ENCODE measurements at regions of chr3 and their contacts with region 1.

Region 1: GRCh38 chr3:15405448-15406050 is 21.8 kb downstream of the METTL6 start:
- DNase-seq: peak in 7 of 35 experiments; percentile 12 to 76 (median 21)
- ATAC-seq: peak in 2 of 4 experiments; percentile 43 to 69
- H3K4me3 ChIP-seq: no peak overlapping the region
- H3K4me3 Mint-ChIP-seq: no peak overlapping the region
- H3K27ac ChIP-seq: no peak overlapping the region
- H3K27ac Mint-ChIP-seq: no peak overlapping the region
- H3K4me1 ChIP-seq: peaks cover 0 to 2% of the 10 kb centered on the region in 2 experiments
- H3K4me1 Mint-ChIP-seq: peaks cover 0 to 16% (median 7%) of the 10 kb centered on the region in 3 donors
- H3K27me3 ChIP-seq: no peaks in the 10 kb centered on the region
- H3K27me3 Mint-ChIP-seq: no peaks in the 10 kb centered on the region

Region 2: GRCh38 chr3:15199493-15200105 is 205.9 kb before region 1 on chr3:
- CTCF ChIA-PET with region 1: interaction called, 22 to 82 read pairs
- POLR2A ChIA-PET with region 1: interaction called in 1 of 2 experiments, 3 read pairs
- DNase-seq: no peak
- ATAC-seq: no peak
- H3K4me3 ChIP-seq: no peak overlapping the region
- H3K4me3 Mint-ChIP-seq: no peak overlapping the region
- H3K27ac ChIP-seq: no peak overlapping the region
- H3K27ac Mint-ChIP-seq: no peak overlapping the region
- H3K4me1 ChIP-seq: peaks cover 0 to 5% of the 10 kb centered on the region in 2 experiments
- H3K4me1 Mint-ChIP-seq: peaks cover 2 to 12% (median 3%) of the 10 kb centered on the region in 3 donors
- H3K27me3 ChIP-seq: no peaks in the 10 kb centered on the region
- H3K27me3 Mint-ChIP-seq: no peaks in the 10 kb centered on the region

Region 3: DNA sequence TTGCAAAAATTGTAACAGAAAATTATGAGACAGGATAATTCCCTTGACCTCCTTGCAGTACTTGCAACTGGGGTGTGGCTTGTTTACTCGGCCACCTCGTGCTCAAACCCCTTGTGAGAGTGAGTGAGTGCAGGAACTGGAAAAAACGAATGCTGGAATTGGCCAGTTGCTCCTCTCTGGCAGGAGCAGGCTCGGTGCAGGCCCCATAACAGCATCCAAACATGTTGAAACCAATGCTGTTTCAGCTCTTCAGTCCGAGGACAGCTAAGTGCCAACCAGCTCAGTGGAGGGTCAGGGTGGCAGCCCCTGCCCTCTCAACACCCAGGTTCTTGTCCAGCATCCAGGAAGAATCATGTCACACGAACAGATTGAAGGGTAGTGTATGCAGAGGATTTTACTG is 15.1 kb before region 1 on chr3:
- CTCF ChIA-PET with region 1: no interaction called
- POLR2A ChIA-PET with region 1: no interaction called
- DNase-seq: no peak
- ATAC-seq: no peak
- H3K4me3 ChIP-seq: no peak overlapping the region
- H3K4me3 Mint-ChIP-seq: no peak overlapping the region
- H3K27ac ChIP-seq: no peak overlapping the region
- H3K27ac Mint-ChIP-seq: no peak overlapping the region
- H3K4me1 ChIP-seq: no peaks in the 10 kb centered on the region
- H3K4me1 Mint-ChIP-seq: peaks cover 0 to 12% (median 0%) of the 10 kb centered on the region in 3 donors
- H3K27me3 ChIP-seq: no peaks in the 10 kb centered on the region
- H3K27me3 Mint-ChIP-seq: no peaks in the 10 kb centered on the region

Region 4: DNA sequence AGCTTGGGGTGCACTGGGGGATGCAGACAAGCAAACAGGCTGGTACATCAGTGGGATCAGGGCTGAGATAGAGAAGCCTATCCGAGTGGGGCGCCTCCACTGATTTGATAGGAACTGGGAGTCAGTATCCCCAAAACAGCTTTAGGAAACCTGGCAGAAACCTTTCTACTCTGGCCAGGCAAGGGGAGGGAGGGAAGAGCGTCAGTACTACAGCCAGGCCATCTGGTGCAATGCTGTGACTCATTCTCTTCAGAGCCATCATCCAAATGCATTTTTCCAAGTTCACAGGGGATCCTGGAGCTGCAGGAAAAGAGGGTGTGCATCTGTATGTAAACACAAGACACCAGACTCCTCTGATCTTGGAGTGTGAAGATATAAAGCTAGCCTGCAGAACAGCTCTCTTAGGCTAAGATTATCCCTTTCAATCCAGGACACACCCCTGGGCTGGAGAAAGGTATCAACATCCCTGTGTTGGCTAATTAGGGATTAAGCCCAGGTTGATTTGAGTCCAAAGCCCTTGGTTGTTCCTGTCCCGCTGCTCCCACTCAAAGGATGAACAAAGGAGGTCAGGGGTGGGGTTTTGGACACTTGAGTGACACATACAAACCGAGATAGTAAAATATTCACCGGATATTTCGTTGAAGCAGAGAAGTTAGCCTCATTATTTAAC is 778.2 kb after region 1 on chr3:
- CTCF ChIA-PET with region 1: no interaction called
- POLR2A ChIA-PET with region 1: no interaction called
- DNase-seq: no peak
- ATAC-seq: no peak
- H3K4me3 ChIP-seq: no peak overlapping the region
- H3K4me3 Mint-ChIP-seq: no peak overlapping the region
- H3K27ac ChIP-seq: no peak overlapping the region
- H3K27ac Mint-ChIP-seq: no peak overlapping the region
- H3K4me1 ChIP-seq: no peaks in the 10 kb centered on the region
- H3K4me1 Mint-ChIP-seq: peaks cover 1 to 2% (median 2%) of the 10 kb centered on the region in 3 donors
- H3K27me3 ChIP-seq: peaks cover 0 to 6% of the 10 kb centered on the region in 2 experiments
- H3K27me3 Mint-ChIP-seq: peaks cover 2 to 7% of the 10 kb centered on the region in 2 donors